Mammary epithelial cell (primary cell): ENCODE measurements at regions of chr22 and their contacts with region 1.

Region 1: GRCh38 chr22:31185056-31185455 is 25.1 kb downstream of the RNF185 start:
- DNase-seq: no peak
- H3K4me3 ChIP-seq: no peak overlapping the region
- H3K27ac ChIP-seq: no peak overlapping the region
- H3K4me1 ChIP-seq: no peaks in the 10 kb centered on the region
- H3K27me3 ChIP-seq: no peaks in the 10 kb centered on the region
- CTCF ChIP-seq: no peak

Region 2: DNA sequence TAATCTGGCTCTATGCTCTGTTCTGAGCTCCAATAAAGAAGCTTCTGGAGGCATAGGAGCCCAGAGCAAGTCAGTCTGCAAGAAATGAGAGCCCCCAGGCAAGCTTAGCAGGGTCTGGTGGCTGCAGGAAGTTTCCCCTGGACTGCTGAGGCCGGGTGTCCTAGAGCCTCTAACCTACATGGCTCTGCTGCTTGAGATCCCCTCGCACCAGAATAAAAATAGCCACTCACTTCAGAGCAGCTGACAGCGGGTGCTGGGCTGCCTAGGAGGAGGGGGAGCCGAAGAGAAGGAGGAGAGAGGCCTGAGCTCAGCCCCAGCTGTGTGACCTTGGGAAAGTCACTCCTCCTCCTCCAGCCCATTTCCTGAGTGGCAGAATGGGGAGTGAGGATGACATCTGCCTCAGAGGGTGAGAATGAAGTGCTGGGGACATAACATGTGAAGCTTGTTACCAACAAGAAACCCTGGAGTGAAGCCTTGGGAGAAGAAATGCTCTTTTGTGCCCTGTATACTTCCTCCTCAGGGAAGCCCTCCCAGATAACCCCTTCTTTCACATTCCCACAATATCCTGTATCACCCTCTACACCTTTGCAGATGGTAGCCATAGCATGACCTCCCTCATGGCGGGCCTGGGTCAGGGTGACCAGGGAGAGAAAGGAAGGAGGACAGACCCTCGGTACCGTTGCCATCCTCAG is 65.9 kb before region 1 on chr22:
- CTCF ChIA-PET with region 1: no interaction called
- dilution Hi-C with region 1: loop called (anchors 5 kb)
- in situ Hi-C with region 1: no loop called
- intact Hi-C with region 1: no loop called
- DNase-seq: no peak
- H3K4me3 ChIP-seq: no peak overlapping the region
- H3K27ac ChIP-seq: no peak overlapping the region
- H3K4me1 ChIP-seq: peaks cover 7% of the 10 kb centered on the region
- H3K27me3 ChIP-seq: no peaks in the 10 kb centered on the region
- CTCF ChIP-seq: no peak

Region 3: DNA sequence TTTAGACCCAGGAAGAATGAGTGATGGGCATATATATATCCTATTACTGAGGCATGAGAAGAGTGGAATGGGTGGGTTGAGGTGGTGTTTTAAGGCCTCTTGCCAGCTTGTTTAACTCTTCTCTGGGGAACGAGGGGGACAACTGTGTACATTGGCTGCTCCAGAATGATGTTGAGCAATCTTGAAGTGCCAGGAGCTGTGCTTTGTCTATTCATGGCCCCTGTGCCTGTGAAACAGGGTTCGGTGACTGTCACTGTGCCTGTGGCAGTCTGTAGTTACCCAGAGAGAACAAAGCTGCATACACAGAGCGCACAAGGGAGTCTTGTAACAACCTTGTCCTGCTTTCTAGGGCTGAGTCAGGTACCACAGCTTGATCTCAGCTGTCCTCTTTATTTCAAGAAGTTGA is 38.7 kb after region 1 on chr22:
- CTCF ChIA-PET with region 1: no interaction called
- dilution Hi-C with region 1: loop called (anchors 5 kb)
- in situ Hi-C with region 1: no loop called
- intact Hi-C with region 1: no loop called
- DNase-seq: peak; percentile 26
- H3K4me3 ChIP-seq: no peak overlapping the region
- H3K27ac ChIP-seq: no peak overlapping the region
- H3K4me1 ChIP-seq: peaks cover 5% of the 10 kb centered on the region
- H3K27me3 ChIP-seq: no peaks in the 10 kb centered on the region
- CTCF ChIP-seq: no peak

Region 4: DNA sequence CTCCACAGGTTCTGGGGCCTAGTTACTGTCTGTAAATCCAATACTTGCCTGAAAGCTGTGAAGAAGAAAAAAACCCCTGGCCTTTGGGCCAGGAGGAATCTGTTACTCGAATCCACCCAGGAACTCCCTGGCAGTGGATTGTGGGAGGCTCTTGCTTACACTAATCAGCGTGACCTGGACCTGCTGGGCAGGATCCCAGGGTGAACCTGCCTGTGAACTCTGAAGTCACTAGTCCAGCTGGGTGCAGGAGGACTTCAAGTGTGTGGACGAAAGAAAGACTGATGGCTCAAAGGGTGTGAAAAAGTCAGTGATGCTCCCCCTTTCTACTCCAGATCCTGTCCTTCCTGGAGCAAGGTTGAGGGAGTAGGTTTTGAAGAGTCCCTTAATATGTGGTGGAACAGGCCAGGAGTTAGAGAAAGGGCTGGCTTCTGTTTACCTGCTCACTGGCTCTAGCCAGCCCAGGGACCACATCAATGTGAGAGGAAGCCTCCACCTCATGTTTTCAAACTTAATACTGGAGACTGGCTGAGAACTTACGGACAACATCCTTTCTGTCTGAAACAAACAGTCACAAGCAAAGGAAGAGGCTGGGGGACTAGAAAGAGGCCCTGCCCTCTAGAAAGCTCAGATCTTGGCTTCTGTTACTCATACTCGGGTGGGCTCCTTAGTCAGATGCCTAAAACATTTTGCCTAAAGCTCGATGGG is 93.7 kb after region 1 on chr22:
- CTCF ChIA-PET with region 1: no interaction called
- dilution Hi-C with region 1: loop called (anchors 5 kb)
- in situ Hi-C with region 1: no loop called
- intact Hi-C with region 1: no loop called
- DNase-seq: no peak
- H3K4me3 ChIP-seq: no peak overlapping the region
- H3K27ac ChIP-seq: no peak overlapping the region
- H3K4me1 ChIP-seq: no peaks in the 10 kb centered on the region
- H3K27me3 ChIP-seq: no peaks in the 10 kb centered on the region
- CTCF ChIP-seq: no peak